ENCODE measurements at regions of chr4 and their contacts with region 1.

Region 1: DNA sequence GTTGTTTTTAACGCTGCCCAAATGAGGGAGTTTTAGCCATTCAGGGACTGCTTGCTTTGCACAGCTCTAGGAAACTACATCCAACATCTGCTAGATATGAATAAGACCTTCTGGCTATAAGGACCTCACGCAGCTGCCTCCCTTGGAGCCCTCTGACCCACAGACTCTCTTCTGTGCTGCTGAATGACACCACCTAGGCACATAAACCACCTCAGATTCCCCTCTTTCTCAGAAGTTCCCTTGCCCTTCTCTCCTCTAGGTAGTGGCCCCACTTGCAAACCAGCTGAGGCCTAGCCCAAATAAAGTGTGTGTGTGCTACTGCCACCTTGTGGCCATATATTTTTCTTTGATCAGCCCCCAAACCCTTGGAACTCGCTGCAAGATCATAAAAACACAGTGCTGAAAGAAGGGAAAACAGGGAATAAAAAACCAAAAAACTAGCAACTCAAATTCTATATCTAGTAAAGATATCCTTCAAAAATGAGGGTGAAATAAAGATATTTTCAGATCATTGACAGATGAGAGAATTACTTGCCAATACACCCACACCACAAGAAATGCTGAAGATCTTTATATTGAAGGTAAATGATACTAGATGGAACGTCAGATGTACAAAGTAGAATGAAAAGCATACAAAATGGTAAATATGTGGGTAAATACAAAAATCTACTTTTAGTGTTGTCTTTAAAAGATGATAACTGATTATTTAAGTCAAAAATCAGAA is 265.9 kb downstream of the ADAMTS3 start:
- DNase-seq: peak; percentile 49
- H3K4me3 Mint-ChIP-seq: no peak overlapping the region
- H3K27ac Mint-ChIP-seq: no peak overlapping the region
- H3K4me1 Mint-ChIP-seq: no peaks in the 10 kb centered on the region
- H3K27me3 Mint-ChIP-seq: no peaks in the 10 kb centered on the region

Region 2: GRCh38 chr4:71184195-71184781 is 1118.9 kb before region 1 on chr4:
- CTCF ChIA-PET with region 1: no interaction called
- intact Hi-C with region 1: loop called (anchors 5 kb)
- DNase-seq: peak; percentile 69
- H3K4me3 Mint-ChIP-seq: no peak overlapping the region
- H3K27ac Mint-ChIP-seq: no peak overlapping the region
- H3K4me1 Mint-ChIP-seq: peaks cover 18% of the 10 kb centered on the region
- H3K27me3 Mint-ChIP-seq: peaks cover 35% of the 10 kb centered on the region

Region 3: DNA sequence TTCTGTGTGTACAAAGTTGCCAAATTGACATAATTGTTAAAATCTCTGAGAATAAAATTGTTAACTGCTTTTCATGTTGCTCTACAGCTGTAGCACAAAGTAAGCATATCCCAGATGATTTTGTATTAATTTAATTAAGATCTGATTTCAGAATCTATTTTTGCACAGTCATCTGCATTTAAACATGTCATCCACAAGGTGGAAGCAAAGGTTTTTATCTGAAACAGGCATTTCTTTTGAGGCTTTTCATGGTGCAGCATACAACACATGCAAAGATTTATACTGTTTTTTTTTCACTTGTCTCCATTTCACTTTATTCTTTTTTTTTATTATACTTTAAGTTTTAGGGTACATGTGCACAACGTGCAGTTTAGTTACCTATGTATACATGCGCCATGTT is 570.4 kb before region 1 on chr4:
- CTCF ChIA-PET with region 1: no interaction called
- intact Hi-C with region 1: loop called (anchors 2 kb)
- DNase-seq: no peak
- H3K4me3 Mint-ChIP-seq: no peak overlapping the region
- H3K27ac Mint-ChIP-seq: no peak overlapping the region
- H3K4me1 Mint-ChIP-seq: no peaks in the 10 kb centered on the region
- H3K27me3 Mint-ChIP-seq: peaks cover 9% of the 10 kb centered on the region

Region 4: GRCh38 chr4:71772592-71772991 is 530.6 kb before region 1 on chr4:
- CTCF ChIA-PET with region 1: no interaction called
- intact Hi-C with region 1: loop called (anchors 5 kb)
- DNase-seq: no peak
- H3K4me3 Mint-ChIP-seq: no peak overlapping the region
- H3K27ac Mint-ChIP-seq: no peak overlapping the region
- H3K4me1 Mint-ChIP-seq: no peaks in the 10 kb centered on the region
- H3K27me3 Mint-ChIP-seq: no peaks in the 10 kb centered on the region

Region 5: GRCh38 chr4:72112514-72113156 is 190.5 kb before region 1 on chr4:
- CTCF ChIA-PET with region 1: no interaction called
- intact Hi-C with region 1: loop called (anchors 10 kb)
- DNase-seq: peak; percentile 54
- H3K4me3 Mint-ChIP-seq: no peak overlapping the region
- H3K27ac Mint-ChIP-seq: no peak overlapping the region
- H3K4me1 Mint-ChIP-seq: peaks cover 7% of the 10 kb centered on the region
- H3K27me3 Mint-ChIP-seq: peaks cover 2% of the 10 kb centered on the region